ENCODE measurements at regions of chr16 and their contacts with region 1.

Region 1: DNA sequence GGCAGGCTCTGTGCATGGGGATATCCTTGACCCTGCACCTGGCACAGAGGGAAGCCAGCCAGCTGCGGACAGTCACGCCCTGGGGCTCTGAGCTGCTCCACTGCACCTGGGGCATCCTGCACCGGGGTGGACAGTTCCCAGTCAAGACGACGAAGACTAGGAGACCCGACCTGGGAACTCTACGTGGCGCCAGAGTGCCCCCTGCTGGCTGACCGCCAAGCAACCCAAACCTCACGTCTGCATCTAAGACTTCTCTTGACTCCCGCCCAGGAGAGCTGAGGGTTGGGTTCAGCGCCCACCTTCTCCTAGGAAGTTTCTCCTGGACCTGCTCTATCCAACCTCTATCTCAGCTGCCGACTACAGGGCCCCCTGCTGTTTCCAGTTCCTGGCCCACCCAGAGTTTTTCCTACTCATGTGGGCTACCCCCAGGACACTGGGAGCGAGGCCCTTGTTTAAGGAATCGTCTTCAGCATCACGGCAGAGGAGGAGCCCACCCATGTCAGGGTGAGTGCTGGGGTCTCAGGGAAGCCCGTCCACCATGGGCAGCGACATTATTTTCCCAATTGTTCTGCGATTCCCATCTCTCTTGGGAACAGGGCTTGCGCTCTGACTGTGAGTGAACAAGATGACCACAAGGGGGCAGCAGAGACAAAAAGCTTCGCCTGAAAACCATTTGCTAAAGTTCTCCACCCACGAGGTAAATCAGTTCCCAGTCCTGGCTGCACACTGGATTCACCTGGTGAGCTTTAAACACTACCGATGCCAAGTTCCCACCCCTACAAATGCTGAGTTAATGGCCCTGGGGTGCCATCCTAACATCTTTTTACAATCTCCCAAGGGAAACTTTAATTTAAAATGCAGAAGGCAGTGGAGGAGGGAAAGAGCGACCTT is 29.3 kb downstream of the TLE7 start:
- DNase-seq: peak; percentile 49
- H3K4me3 ChIP-seq: no peak overlapping the region
- H3K27ac ChIP-seq: no peak overlapping the region
- H3K4me1 ChIP-seq: no peaks in the 10 kb centered on the region
- H3K27me3 ChIP-seq: peaks cover 2% of the 10 kb centered on the region
- CTCF ChIP-seq: peak; percentile 72 to 84

Region 2: GRCh38 chr16:71214746-71215381 is 197.7 kb before region 1 on chr16:
- CTCF ChIA-PET with region 1: no interaction called
- dilution Hi-C with region 1: no loop called
- in situ Hi-C with region 1: no loop called
- intact Hi-C with region 1: loop called (anchors 2 kb)
- DNase-seq: peak; percentile 11
- H3K4me3 ChIP-seq: no peak overlapping the region
- H3K27ac ChIP-seq: no peak overlapping the region
- H3K4me1 ChIP-seq: no peaks in the 10 kb centered on the region
- H3K27me3 ChIP-seq: peaks cover 4% of the 10 kb centered on the region
- CTCF ChIP-seq: peak in 1 of 2 donors; percentile 38

Region 3: GRCh38 chr16:71493213-71493612 is 80.7 kb after region 1 on chr16:
- CTCF ChIA-PET with region 1: interaction called, 5 read pairs
- dilution Hi-C with region 1: loop called (anchors 5 kb)
- in situ Hi-C with region 1: loop called in 1 of 2 experiments (anchors 5 kb)
- intact Hi-C with region 1: loop called (anchors 1 kb)
- DNase-seq: no peak
- H3K4me3 ChIP-seq: no peak overlapping the region
- H3K27ac ChIP-seq: no peak overlapping the region
- H3K4me1 ChIP-seq: no peaks in the 10 kb centered on the region
- H3K27me3 ChIP-seq: no peaks in the 10 kb centered on the region
- CTCF ChIP-seq: no peak

Region 4: GRCh38 chr16:71499775-71500364 is 87.4 kb after region 1 on chr16:
- CTCF ChIA-PET with region 1: interaction called, 3 read pairs
- dilution Hi-C with region 1: no loop called
- in situ Hi-C with region 1: loop called (anchors 5 kb)
- intact Hi-C with region 1: loop called (anchors 1 kb)
- DNase-seq: peak; percentile 37
- H3K4me3 ChIP-seq: no peak overlapping the region
- H3K27ac ChIP-seq: no peak overlapping the region
- H3K4me1 ChIP-seq: no peaks in the 10 kb centered on the region
- H3K27me3 ChIP-seq: no peaks in the 10 kb centered on the region
- CTCF ChIP-seq: peak; percentile 72 to 82

Region 5: DNA sequence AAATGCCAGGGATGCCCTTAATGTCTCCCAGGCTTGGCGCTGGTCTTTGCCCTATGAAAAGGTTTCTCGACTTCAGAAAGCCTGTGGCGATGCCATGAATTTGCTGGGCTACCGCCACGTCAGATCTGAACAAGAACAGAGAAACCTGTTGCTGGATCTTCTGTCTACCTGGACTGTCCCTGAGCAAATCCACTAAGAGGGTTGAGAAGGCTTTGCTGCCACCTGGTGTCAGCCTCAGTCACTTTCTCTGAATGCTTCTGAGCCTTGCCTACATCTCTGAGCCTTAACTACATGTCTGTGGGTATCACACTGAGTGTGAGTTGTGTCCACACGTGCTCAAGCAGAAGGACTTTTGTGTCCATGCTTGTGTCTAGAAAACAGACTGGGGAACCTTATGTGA is 125.1 kb after region 1 on chr16:
- CTCF ChIA-PET with region 1: interaction called, 7 read pairs
- dilution Hi-C with region 1: no loop called
- in situ Hi-C with region 1: no loop called
- intact Hi-C with region 1: loop called (anchors 1 kb)
- DNase-seq: peak; percentile 54
- H3K4me3 ChIP-seq: no peak overlapping the region
- H3K27ac ChIP-seq: no peak overlapping the region
- H3K4me1 ChIP-seq: no peaks in the 10 kb centered on the region
- H3K27me3 ChIP-seq: no peaks in the 10 kb centered on the region
- CTCF ChIP-seq: peak; percentile 80 to 83

Region 6: DNA sequence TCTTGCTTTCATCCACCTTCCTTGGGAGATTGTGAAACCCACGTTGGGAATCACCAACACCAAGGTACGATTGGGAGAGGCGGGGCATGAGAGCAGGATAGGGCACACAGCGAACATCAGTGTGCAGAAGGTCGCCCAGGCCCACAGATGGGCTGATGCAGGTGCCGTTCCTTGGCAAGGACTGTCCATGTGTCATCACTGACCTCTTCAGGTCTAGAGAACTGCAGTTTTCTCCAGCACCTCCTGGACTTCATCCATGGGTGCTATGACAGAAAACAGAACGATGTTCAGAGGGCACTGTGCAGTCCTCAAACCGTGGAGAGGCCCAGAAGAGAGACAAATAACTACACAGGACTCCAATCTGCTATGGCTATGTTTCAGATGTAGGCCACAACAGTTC is 188.3 kb after region 1 on chr16:
- CTCF ChIA-PET with region 1: no interaction called
- dilution Hi-C with region 1: no loop called
- in situ Hi-C with region 1: no loop called
- intact Hi-C with region 1: no loop called
- DNase-seq: no peak
- H3K4me3 ChIP-seq: no peak overlapping the region
- H3K27ac ChIP-seq: no peak overlapping the region
- H3K4me1 ChIP-seq: no peaks in the 10 kb centered on the region
- H3K27me3 ChIP-seq: no peaks in the 10 kb centered on the region
- CTCF ChIP-seq: no peak